Right ventricle myocardium superior (tissue), 1 donor: ENCODE measurements at regions of chr9 and their contacts with region 1.

Region 1: DNA sequence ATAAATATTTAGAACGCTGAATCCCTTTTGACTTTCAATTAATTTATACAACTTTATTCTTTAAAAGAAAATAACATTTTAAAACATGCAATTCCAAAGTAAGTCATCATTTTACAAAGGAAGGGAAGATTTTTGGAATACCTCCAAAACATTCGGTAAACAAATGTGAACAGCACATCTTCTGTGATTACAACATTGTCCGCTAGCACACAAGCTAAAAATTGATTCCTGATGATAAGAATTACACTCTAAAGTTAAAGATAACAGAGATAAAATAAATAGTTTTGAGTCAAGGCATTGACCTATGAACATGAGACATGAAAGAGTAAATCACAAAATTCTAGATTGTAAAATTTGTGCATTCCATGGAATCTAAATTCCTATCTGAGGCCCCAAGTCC is 56.2 kb upstream of the TRAF1 start:
- DNase-seq: no peak
- ATAC-seq: no peak

Region 2: GRCh38 chr9:120928483-120929228 is 54.2 kb before region 1 on chr9:
- intact Hi-C with region 1: no loop called
- DNase-seq: peak; percentile 89
- ATAC-seq: peak; percentile 96

Region 3: DNA sequence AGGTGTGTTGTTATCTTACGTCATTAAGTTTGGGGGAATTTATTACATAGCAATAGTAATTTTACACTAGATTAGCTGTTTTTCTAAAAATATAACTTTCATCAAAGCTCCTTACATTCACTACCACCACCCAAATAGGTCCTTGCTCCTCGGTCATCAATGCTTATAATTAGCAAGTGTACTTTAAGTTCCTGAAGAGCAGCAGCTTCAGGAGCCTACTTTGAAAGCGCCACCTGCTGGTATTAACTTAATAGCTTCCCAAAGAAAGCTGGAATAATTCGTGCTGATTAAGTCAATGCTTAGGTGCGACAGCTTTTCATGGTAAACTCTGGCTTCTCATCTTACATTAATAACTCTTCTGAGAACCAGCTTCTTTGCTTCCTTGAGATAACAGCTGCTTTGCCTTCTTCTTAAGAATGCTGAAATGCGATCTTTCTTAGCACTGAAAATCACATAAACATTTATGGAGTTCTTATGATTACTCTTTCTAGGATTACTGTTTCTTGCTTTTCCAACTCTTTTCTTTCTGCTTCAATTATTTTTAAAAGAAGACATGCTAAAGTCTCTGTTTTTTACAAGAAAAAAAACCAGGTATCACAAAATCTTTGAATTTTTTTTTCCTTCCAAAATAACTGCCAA is 77.3 kb after region 1 on chr9:
- intact Hi-C with region 1: loop called (anchors 5 kb)
- DNase-seq: no peak
- ATAC-seq: peak; percentile 36